Activated CD4-positive, alpha-beta T cell treated with anti-CD3 and anti-CD28 coated beads for 36 hours (primary cell): ENCODE measurements at regions of chr9 and their contacts with region 1.

Region 1: GRCh38 chr9:89428901-89429890 is 68.7 kb downstream of the SEMA4D start:
- DNase-seq: peak; percentile 75
- ATAC-seq: peak; percentile 47
- H3K4me3 Mint-ChIP-seq: no peak overlapping the region
- H3K27ac Mint-ChIP-seq: peak overlapping the region; percentile 88
- H3K4me1 Mint-ChIP-seq: peaks cover 97% of the 10 kb centered on the region
- H3K27me3 Mint-ChIP-seq: no peaks in the 10 kb centered on the region

Region 2: GRCh38 chr9:89410641-89411350 is 18.4 kb before region 1 on chr9:
- CTCF ChIA-PET with region 1: interaction called, 39 read pairs
- POLR2A ChIA-PET with region 1: interaction called, 8 read pairs
- intact Hi-C with region 1: loop called (anchors 1 to 2 kb)
- DNase-seq: peak; percentile 85
- ATAC-seq: peak; percentile 81
- H3K4me3 Mint-ChIP-seq: peak overlapping the region; percentile 50
- H3K27ac Mint-ChIP-seq: peak overlapping the region; percentile 92
- H3K4me1 Mint-ChIP-seq: peaks cover 90% of the 10 kb centered on the region
- H3K27me3 Mint-ChIP-seq: no peaks in the 10 kb centered on the region

Region 3: GRCh38 chr9:89442981-89443814 is 14.0 kb after region 1 on chr9:
- CTCF ChIA-PET with region 1: interaction called, 118 read pairs
- POLR2A ChIA-PET with region 1: interaction called, 10 read pairs
- intact Hi-C with region 1: no loop called
- DNase-seq: no peak
- ATAC-seq: peak; percentile 7
- H3K4me3 Mint-ChIP-seq: no peak overlapping the region
- H3K27ac Mint-ChIP-seq: peak overlapping the region; percentile 94
- H3K4me1 Mint-ChIP-seq: peaks cover 93% of the 10 kb centered on the region
- H3K27me3 Mint-ChIP-seq: no peaks in the 10 kb centered on the region

Region 4: DNA sequence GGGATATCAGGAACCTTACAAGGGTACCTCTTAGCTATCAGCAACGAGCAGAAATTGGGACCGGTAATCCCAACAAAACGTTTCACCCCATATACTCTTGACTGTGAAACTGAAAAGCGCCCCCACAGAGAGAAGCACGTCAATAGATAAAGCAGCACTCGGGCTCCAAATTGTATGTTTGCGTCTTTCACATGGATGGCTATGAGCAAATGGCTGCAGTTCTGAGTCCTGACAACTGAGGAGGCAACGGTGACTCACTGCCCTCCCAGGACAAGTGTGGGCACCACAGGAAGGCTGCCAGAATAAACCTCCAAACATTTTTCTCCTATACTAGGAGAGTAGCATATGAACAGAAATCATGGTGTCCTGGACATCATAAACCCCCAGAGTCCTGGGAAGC is 32.1 kb after region 1 on chr9:
- CTCF ChIA-PET with region 1: interaction called, 11 read pairs
- POLR2A ChIA-PET with region 1: interaction called, 7 read pairs
- intact Hi-C with region 1: loop called in 1 of 2 experiments (anchors 1 kb)
- DNase-seq: peak; percentile 78
- ATAC-seq: peak; percentile 48
- H3K4me3 Mint-ChIP-seq: no peak overlapping the region
- H3K27ac Mint-ChIP-seq: peak overlapping the region; percentile 70
- H3K4me1 Mint-ChIP-seq: peaks cover 98% of the 10 kb centered on the region
- H3K27me3 Mint-ChIP-seq: no peaks in the 10 kb centered on the region

Region 5: DNA sequence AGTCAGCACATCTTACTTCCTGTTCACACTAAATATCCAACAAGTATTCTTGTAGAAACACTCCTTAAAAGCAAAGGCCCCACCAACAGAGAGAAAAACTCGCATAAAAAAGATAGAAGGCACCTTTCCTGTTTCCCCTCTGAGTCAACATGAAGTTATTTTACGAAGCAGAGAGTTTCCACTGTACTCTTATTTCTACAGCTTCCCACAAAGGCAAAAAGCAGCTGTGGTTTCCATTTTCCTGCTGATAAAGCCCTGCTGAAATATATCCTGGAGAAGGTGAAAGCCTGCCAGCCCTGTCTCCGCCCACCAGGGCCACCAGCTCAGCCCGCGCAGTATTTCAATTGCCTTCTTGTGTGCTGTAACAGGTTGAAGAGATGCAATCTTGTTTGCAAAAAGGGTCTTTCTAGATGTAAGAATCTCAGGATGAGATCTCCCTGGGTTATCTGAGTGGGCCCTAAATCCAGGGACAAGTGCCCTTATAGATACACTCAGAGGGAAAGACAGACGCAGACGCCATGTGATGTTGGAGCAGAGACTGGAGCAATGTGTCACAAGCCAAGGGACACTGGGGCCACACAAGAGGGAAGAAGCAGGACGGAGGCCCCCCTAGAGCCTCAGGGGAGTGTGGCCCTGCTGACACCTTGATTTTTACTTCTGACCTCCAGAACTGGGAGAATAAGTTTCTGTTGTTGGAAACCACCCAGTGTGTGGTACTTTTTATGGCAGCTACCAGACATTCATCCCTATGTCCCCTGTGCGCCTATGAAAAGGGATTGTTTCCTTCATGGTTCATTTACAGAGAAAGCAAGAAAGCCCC is 48.8 kb after region 1 on chr9:
- CTCF ChIA-PET with region 1: interaction called, 5 read pairs
- POLR2A ChIA-PET with region 1: interaction called, 4 read pairs
- intact Hi-C with region 1: loop called in 1 of 2 experiments (anchors 2 kb)
- DNase-seq: peak; percentile 79
- ATAC-seq: peak; percentile 43
- H3K4me3 Mint-ChIP-seq: peak overlapping the region; percentile 92
- H3K27ac Mint-ChIP-seq: peak overlapping the region; percentile 99
- H3K4me1 Mint-ChIP-seq: peaks cover 94% of the 10 kb centered on the region
- H3K27me3 Mint-ChIP-seq: no peaks in the 10 kb centered on the region

Region 6: GRCh38 chr9:89513837-89514236 is 84.6 kb after region 1 on chr9:
- CTCF ChIA-PET with region 1: no interaction called
- POLR2A ChIA-PET with region 1: no interaction called
- intact Hi-C with region 1: no loop called
- DNase-seq: no peak
- ATAC-seq: no peak
- H3K4me3 Mint-ChIP-seq: no peak overlapping the region
- H3K27ac Mint-ChIP-seq: no peak overlapping the region
- H3K4me1 Mint-ChIP-seq: peaks cover 58% of the 10 kb centered on the region
- H3K27me3 Mint-ChIP-seq: no peaks in the 10 kb centered on the region

Region 7: GRCh38 chr9:89536145-89536574 is 107.0 kb after region 1 on chr9:
- CTCF ChIA-PET with region 1: interaction called, 7 read pairs
- POLR2A ChIA-PET with region 1: no interaction called
- intact Hi-C with region 1: loop called in 1 of 2 experiments (anchors 2 kb)
- DNase-seq: no peak
- ATAC-seq: peak; percentile 68
- H3K4me3 Mint-ChIP-seq: peak overlapping the region; percentile 57
- H3K27ac Mint-ChIP-seq: peak overlapping the region; percentile 97
- H3K4me1 Mint-ChIP-seq: peaks cover 88% of the 10 kb centered on the region
- H3K27me3 Mint-ChIP-seq: no peaks in the 10 kb centered on the region

Region 8: GRCh38 chr9:89984214-89984613 is 555.0 kb after region 1 on chr9:
- CTCF ChIA-PET with region 1: no interaction called
- POLR2A ChIA-PET with region 1: no interaction called
- intact Hi-C with region 1: loop called in 1 of 2 experiments (anchors 2 kb)
- DNase-seq: no peak
- ATAC-seq: peak; percentile 56
- H3K4me3 Mint-ChIP-seq: peak overlapping the region; percentile 27
- H3K27ac Mint-ChIP-seq: peak overlapping the region; percentile 89
- H3K4me1 Mint-ChIP-seq: peaks cover 47% of the 10 kb centered on the region
- H3K27me3 Mint-ChIP-seq: peaks cover 33% of the 10 kb centered on the region